ENCODE measurements at regions of chr4 and their contacts with region 1.

Region 1: DNA sequence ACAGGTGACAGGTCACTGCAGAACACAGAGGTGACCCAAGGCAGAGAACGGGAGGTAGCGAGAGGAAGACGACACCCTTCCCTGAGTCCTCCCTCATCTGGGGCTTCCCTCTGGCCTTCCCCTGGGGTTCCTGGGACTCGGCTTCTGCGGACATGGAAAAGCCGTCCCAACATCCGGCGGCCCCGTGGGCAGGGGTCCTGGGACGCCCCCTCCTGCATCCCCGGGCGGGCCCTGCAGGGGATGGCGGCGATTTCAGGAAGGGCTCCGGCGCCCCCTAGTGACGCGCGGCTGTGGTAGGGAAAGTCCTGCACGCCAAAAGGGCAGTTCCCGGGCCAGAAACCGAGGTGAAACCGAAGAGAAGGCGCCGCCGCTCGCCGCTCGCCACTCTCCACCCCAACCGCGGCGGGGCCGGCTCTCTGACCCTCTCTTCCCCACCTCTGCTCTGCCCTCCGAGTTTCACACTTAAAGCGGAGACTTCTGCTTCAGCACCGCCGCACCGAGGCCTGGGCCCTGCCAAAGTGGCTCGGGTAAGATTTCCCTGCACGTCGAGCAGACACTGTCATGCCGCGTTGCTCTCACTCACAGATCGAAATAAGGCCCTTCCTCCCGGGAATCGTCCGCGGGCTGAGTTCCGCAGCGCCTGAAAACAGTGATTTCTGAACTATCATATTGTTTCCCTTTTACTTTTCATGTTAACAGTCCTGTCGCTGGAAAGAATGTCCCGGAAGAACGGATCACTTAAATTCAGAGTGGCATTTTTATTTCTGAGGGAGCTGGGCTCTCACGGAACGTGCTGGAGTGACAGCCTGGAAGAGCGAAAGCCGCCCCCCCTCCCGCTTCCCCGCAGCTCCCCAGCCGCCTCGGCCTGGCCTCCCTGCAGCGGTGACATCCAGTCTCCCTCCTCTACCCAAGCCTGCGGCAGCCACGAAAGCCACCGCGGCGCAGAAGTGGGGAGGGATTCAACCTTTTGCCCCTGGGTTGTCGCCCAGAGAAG is 110.6 kb downstream of the DCTD start:
- DNase-seq: peak; percentile 87
- H3K4me3 ChIP-seq: peak overlapping the region; percentile 23 to 69 (median 42)
- H3K27ac ChIP-seq: peak overlapping the region in 7 of 8 donors; percentile 37 to 75 (median 51)
- H3K4me1 ChIP-seq: peaks cover 0 to 25% (median 14%) of the 10 kb centered on the region in 6 donors
- H3K27me3 ChIP-seq: peaks cover 0 to 22% (median 0%) of the 10 kb centered on the region in 7 donors
- CTCF ChIP-seq: peak; percentile 21 to 84 (median 69)
- POLR2A ChIP-seq: no peak

Region 2: DNA sequence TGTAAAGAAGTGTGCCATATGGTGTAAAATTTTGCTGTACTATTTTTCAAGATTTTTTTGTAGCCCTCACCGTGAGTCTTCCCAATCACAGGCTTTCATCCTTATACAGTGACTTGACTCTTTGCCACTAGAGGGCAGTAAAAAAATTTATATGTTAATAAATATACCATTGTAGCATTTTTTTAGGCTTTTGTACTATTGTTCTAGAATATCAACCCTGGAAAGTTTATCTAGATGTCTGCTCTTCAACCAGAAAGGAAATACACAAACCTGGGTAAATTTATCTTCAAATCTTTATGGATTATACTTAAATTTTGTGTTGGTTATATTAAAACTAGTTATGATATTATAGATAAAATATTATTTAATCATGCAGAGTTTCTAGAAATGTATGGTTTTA is 328.1 kb before region 1 on chr4:
- intact Hi-C with region 1: loop called (anchors 10 kb)
- DNase-seq: no peak
- H3K4me3 ChIP-seq: no peak overlapping the region
- H3K27ac ChIP-seq: no peak overlapping the region
- H3K4me1 ChIP-seq: no peaks in the 10 kb centered on the region
- H3K27me3 ChIP-seq: peaks cover 0 to 5% (median 0%) of the 10 kb centered on the region in 7 donors
- CTCF ChIP-seq: peak in 9 of 11 experiments; percentile 22 to 73 (median 60)
- POLR2A ChIP-seq: no peak

Measured in spleen (tissue), 13 donors.